B cell (primary cell): ENCODE measurements at regions of chr7 and their contacts with region 1.

Region 1: GRCh38 chr7:90262438-90262837 is 17.5 kb downstream of the CFAP69 start:
- DNase-seq: peak; percentile 14
- ATAC-seq: peak; percentile 43
- H3K4me3 ChIP-seq: no peak overlapping the region
- H3K4me3 Mint-ChIP-seq: no peak overlapping the region
- H3K27ac ChIP-seq: no peak overlapping the region
- H3K27ac Mint-ChIP-seq: no peak overlapping the region
- H3K4me1 ChIP-seq: no peaks in the 10 kb centered on the region
- H3K4me1 Mint-ChIP-seq: no peaks in the 10 kb centered on the region
- H3K27me3 ChIP-seq: no peaks in the 10 kb centered on the region
- H3K27me3 Mint-ChIP-seq: peaks cover 18% of the 10 kb centered on the region
- CTCF ChIP-seq: peak; percentile 69

Region 2: GRCh38 chr7:90424720-90425119 is 162.3 kb after region 1 on chr7:
- CTCF ChIA-PET with region 1: interaction called, 12 read pairs
- POLR2A ChIA-PET with region 1: no interaction called
- intact Hi-C with region 1: loop called (anchors 1 kb)
- DNase-seq: no peak
- ATAC-seq: no peak
- H3K4me3 ChIP-seq: no peak overlapping the region
- H3K4me3 Mint-ChIP-seq: no peak overlapping the region
- H3K27ac ChIP-seq: no peak overlapping the region
- H3K27ac Mint-ChIP-seq: no peak overlapping the region
- H3K4me1 ChIP-seq: no peaks in the 10 kb centered on the region
- H3K4me1 Mint-ChIP-seq: no peaks in the 10 kb centered on the region
- H3K27me3 ChIP-seq: no peaks in the 10 kb centered on the region
- H3K27me3 Mint-ChIP-seq: peaks cover 3% of the 10 kb centered on the region
- CTCF ChIP-seq: no peak